SK-N-SH (cell line): ENCODE measurements at regions of chr1 and their contacts with region 1.

Region 1: GRCh38 chr1:214632091-214632490 is 29.1 kb downstream of the CENPF start:
- DNase-seq: no peak
- H3K4me3 ChIP-seq: no peak overlapping the region
- H3K27ac ChIP-seq: no peak overlapping the region
- H3K4me1 ChIP-seq: peaks cover 0 to 5% of the 10 kb centered on the region in 2 experiments; a peak in 2 of 4 replicates
- H3K27me3 ChIP-seq: no peaks in the 10 kb centered on the region
- CTCF ChIP-seq: no peak
- EP300 ChIP-seq: no peak
- RAD21 ChIP-seq: no peak

Region 2: DNA sequence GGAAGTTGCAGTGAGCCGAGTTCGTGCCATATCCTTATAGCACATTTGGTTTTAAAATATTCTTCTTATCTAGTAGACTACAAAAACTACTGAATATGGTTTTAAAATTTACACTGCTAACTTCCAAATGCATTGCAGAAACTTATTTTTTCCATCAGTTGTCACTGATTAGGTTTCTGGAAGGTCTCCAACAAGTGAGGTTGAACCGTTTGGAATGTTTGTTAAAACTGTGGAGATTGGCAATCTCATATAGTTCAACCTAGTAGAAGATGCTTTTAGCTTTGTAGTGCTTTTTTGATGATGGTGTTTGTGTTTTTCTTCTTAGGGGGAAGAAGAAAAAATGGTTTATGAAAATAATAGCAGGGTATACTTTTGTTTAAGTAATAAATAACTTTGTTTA is 16.2 kb before region 1 on chr1:
- CTCF ChIA-PET with region 1: interaction called, 13 read pairs
- POLR2A ChIA-PET with region 1: no interaction called
- DNase-seq: no peak
- H3K4me3 ChIP-seq: no peak overlapping the region
- H3K27ac ChIP-seq: peak overlapping the region; percentile 32 to 51; a peak in 2 of 4 replicates
- H3K4me1 ChIP-seq: peaks cover 0 to 8% of the 10 kb centered on the region in 2 experiments; a peak in 2 of 4 replicates
- H3K27me3 ChIP-seq: no peaks in the 10 kb centered on the region
- CTCF ChIP-seq: no peak
- EP300 ChIP-seq: no peak
- RAD21 ChIP-seq: no peak

Region 3: DNA sequence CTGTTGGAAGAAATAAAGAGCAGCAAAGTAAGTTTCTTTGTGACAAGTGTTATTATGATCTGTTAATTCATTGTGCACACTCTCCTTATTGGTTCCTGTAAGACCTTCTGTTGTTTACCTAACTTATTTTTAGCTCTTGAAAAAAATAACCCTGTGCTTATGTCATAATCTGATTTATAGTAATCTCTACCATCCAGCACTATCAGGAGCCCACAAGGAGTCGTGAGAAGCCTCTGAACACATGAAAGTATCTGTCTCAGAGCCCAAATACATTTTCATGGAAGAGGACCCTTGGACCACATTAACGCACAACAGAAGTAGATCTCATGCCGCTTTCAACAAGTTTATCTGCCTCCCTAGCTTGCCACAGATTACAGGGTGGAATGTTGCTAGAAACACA is 16.7 kb after region 1 on chr1:
- CTCF ChIA-PET with region 1: interaction called, 32 read pairs
- POLR2A ChIA-PET with region 1: no interaction called
- DNase-seq: no peak
- H3K4me3 ChIP-seq: no peak overlapping the region
- H3K27ac ChIP-seq: no peak overlapping the region
- H3K4me1 ChIP-seq: no peaks in the 10 kb centered on the region; a peak in 1 of 4 replicates
- H3K27me3 ChIP-seq: no peaks in the 10 kb centered on the region
- CTCF ChIP-seq: no peak
- EP300 ChIP-seq: no peak
- RAD21 ChIP-seq: no peak